Uterus (tissue), 4 donors: ENCODE measurements at regions of chr4 and their contacts with region 1.

Region 1: GRCh38 chr4:168923526-168924194 is 86.4 kb downstream of the CBR4 start:
- DNase-seq: peak in 1 of 2 donors; percentile 61
- H3K4me3 ChIP-seq: no peak overlapping the region
- H3K27ac ChIP-seq: peak overlapping the region in 1 of 2 donors; percentile 38
- H3K4me1 ChIP-seq: peaks cover 3 to 4% of the 10 kb centered on the region in 2 donors
- H3K27me3 ChIP-seq: no peaks in the 10 kb centered on the region
- CTCF ChIP-seq: peak; percentile 59 to 76 (median 71)
- POLR2A ChIP-seq: no peak

Region 2: GRCh38 chr4:168585168-168586091 is 338.2 kb before region 1 on chr4:
- intact Hi-C with region 1: loop called (anchors 2 kb)
- DNase-seq: peak; percentile 89 to 92
- H3K4me3 ChIP-seq: no peak overlapping the region
- H3K27ac ChIP-seq: peak overlapping the region; percentile 74 to 77
- H3K4me1 ChIP-seq: peaks cover 6 to 7% of the 10 kb centered on the region in 2 donors
- H3K27me3 ChIP-seq: no peaks in the 10 kb centered on the region
- CTCF ChIP-seq: peak; percentile 76 to 84 (median 80)
- POLR2A ChIP-seq: no peak

Region 3: GRCh38 chr4:169485791-169486742 is 562.4 kb after region 1 on chr4:
- intact Hi-C with region 1: loop called (anchors 10 kb)
- DNase-seq: peak in 1 of 2 donors; percentile 18
- H3K4me3 ChIP-seq: no peak overlapping the region
- H3K27ac ChIP-seq: no peak overlapping the region
- H3K4me1 ChIP-seq: no peaks in the 10 kb centered on the region
- H3K27me3 ChIP-seq: no peaks in the 10 kb centered on the region
- CTCF ChIP-seq: peak; percentile 31 to 70 (median 50)
- POLR2A ChIP-seq: no peak